ENCODE measurements at regions of chrX and their contacts with region 1.

Region 1: GRCh38 chrX:13653022-13653693 is at the start of gene TCEANC:
- DNase-seq: peak; percentile 82 to 97 (median 95)
- ATAC-seq: peak; percentile 93
- H3K4me3 ChIP-seq: peak within 1 kb of the TSS; percentile 63 to 90
- H3K4me3 Mint-ChIP-seq: peak within 1 kb of the TSS; percentile 92
- H3K27ac ChIP-seq: peak within 1 kb of the TSS; percentile 85 to 95
- H3K27ac Mint-ChIP-seq: peak within 1 kb of the TSS; percentile 98
- H3K4me1 ChIP-seq: peaks cover 17% of the 10 kb centered on the region
- H3K4me1 Mint-ChIP-seq: peaks cover 30% of the 10 kb centered on the region
- H3K27me3 ChIP-seq: no peaks in the 10 kb centered on the region
- H3K27me3 Mint-ChIP-seq: no peaks in the 10 kb centered on the region
- CTCF ChIP-seq: no peak
- total RNA-seq, gene TCEANC: 8.2 to 9.5 TPM

Region 2: DNA sequence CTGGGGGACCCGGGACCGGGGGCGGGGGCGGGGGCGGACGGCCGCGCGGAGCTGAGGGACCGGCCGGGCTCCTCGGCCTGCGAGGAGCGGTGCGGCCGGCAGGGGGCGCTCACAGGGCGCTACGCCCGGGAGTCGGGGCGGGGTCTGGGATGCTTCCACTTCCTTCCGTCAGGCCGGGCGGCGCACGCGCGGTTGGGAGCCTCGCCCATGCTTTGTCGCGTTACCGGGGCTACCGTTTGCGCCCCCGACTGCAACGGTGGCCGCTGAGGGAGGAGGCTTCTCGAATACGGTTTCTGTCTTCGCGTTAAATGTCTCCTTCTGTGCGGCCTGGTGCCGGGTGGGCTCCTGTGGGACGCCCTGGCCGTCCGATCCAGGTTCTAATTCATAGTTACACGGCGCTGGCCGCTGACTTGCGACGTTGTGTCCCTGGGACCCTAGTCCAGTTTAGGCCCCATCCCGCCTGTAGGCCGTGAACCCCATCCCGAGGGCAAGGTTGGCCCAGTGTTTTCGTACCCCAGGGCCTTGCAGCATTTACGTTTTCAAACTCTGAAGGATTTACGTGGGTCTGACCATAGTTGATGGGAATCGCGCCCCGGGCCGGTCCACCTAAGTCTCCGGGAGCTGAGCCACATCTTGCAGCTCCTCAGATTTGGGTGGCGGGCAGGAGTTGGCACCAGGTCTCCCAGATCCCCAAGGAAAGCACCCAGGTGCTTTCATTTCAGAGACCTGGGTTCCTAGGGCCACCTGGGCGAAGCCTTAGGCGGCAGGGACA is 1894.6 kb before region 1 on chrX:
- CTCF ChIA-PET with region 1: no interaction called
- POLR2A ChIA-PET with region 1: no interaction called
- intact Hi-C with region 1: loop called in 1 of 2 experiments (anchors 10 kb)
- DNase-seq: peak; percentile 76 to 93 (median 89)
- ATAC-seq: peak; percentile 61
- H3K4me3 ChIP-seq: peak overlapping the region; percentile 76 to 91
- H3K4me3 Mint-ChIP-seq: peak overlapping the region; percentile 88
- H3K27ac ChIP-seq: peak overlapping the region; percentile 87 to 93
- H3K27ac Mint-ChIP-seq: peak overlapping the region; percentile 97
- H3K4me1 ChIP-seq: peaks cover 18% of the 10 kb centered on the region
- H3K4me1 Mint-ChIP-seq: peaks cover 34% of the 10 kb centered on the region
- H3K27me3 ChIP-seq: no peaks in the 10 kb centered on the region
- H3K27me3 Mint-ChIP-seq: no peaks in the 10 kb centered on the region
- CTCF ChIP-seq: peak; percentile 62

Region 3: DNA sequence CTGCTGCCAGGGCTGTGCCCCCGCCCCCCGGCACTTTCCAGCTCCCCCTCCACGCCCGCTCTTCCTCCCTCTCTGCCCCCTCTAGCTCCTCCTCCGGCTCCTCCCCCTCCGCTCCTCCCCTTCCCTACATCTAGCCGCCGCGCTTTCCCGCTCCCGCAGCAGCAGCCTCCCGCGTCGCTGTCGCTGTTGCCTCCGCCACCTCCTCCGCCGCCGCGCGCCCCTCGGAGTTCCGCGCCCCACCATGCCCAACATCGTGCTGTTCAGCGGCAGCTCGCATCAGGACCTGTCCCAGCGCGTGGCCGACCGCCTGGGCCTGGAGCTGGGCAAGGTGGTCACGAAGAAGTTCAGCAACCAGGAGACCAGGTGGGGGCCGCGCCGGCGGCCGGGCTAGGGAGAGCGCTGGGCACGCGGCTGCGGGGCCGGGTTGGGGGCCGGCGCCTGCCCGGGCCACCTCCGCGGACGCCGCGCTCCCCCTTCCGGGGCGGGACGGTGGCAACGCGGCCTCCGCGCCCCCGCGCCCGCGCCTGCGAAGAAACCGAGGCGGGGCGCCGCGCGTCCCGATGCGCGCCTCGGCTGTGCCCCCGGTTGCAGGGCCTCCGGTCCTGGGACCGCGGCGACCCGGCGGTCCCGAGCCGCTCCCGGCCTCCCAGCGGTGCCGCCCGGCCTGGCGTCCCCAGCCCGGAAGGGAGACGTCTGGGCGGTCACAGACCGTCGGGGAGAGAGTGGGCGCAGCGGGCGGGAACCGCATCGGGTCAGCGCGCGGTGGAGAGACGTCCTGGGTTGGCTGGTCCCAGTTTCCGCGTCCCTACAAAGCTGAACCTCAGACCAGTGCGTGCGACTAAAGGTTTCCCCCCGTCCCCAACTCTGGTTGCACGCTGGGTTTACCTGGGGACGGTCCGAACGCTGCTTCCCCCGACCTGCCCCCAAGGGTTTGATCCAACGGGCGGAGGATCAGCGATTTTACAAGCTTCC is 861.6 kb before region 1 on chrX and contains the start of gene PRPS2:
- CTCF ChIA-PET with region 1: no interaction called
- POLR2A ChIA-PET with region 1: no interaction called
- intact Hi-C with region 1: loop called in 1 of 2 experiments (anchors 5 kb)
- DNase-seq: peak; percentile 43 to 80 (median 71)
- ATAC-seq: peak; percentile 93
- H3K4me3 ChIP-seq: peak within 1 kb of the TSS; percentile 69 to 74
- H3K4me3 Mint-ChIP-seq: peak within 1 kb of the TSS; percentile 90
- H3K27ac ChIP-seq: peak within 1 kb of the TSS; percentile 39 to 52
- H3K27ac Mint-ChIP-seq: peak within 1 kb of the TSS; percentile 81
- H3K4me1 ChIP-seq: peaks cover 9% of the 10 kb centered on the region
- H3K4me1 Mint-ChIP-seq: peaks cover 26% of the 10 kb centered on the region
- H3K27me3 ChIP-seq: no peaks in the 10 kb centered on the region
- H3K27me3 Mint-ChIP-seq: no peaks in the 10 kb centered on the region
- CTCF ChIP-seq: no peak
- total RNA-seq, gene PRPS2: 10.5 to 13.4 TPM

Region 4: GRCh38 chrX:12955882-12956703 is 697.1 kb before region 1 on chrX:
- CTCF ChIA-PET with region 1: no interaction called
- POLR2A ChIA-PET with region 1: no interaction called
- intact Hi-C with region 1: loop called in 1 of 2 experiments (anchors 5 kb)
- DNase-seq: peak in 8 of 9 experiments; percentile 50 to 83 (median 68)
- ATAC-seq: peak; percentile 22
- H3K4me3 ChIP-seq: peak overlapping the region; percentile 34 to 43
- H3K4me3 Mint-ChIP-seq: peak overlapping the region; percentile 79
- H3K27ac ChIP-seq: peak overlapping the region; percentile 62 to 89
- H3K27ac Mint-ChIP-seq: peak overlapping the region; percentile 99
- H3K4me1 ChIP-seq: peaks cover 79% of the 10 kb centered on the region
- H3K4me1 Mint-ChIP-seq: peaks cover 74% of the 10 kb centered on the region
- H3K27me3 ChIP-seq: no peaks in the 10 kb centered on the region
- H3K27me3 Mint-ChIP-seq: no peaks in the 10 kb centered on the region
- CTCF ChIP-seq: no peak

Region 5: DNA sequence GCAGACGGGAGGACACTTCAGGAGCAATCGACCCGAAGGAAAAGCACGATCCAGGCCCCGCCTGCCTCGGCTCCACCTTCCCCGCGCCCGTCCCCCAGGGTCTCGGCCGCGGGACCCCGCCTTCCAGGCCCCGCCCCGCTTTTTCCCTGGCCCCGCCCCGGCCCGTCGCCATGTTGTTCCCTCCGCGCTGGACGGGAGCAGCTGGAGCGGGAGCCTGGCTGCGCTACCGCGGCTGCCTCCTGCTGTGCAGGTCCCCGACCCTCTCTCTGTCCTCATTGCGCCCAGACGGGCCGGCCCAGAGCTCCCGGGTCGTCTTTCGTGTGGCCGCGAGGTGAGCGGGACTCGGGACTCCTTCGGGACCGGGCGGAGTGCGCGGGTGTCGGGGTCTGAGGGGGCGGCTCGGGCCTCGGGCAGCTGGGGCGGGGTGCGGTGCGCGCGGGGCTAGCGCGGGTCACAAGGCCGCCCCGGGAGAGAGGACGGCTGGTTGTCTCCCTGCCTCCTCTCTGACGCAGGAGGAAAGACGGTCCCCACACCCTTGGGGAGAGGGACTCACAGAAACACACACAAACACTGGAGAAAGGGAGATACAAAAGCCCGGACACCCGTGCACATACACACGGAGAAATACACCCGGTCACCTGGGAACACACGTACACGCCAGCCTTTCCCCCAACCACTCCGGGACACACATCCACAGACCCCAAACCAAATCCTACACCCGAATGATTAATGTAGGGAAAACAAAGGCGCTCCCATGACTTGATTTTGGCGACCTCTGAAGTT is 36.0 kb after region 1 on chrX and contains the start of gene RAB9A:
- CTCF ChIA-PET with region 1: no interaction called
- POLR2A ChIA-PET with region 1: interaction called, 4 read pairs
- intact Hi-C with region 1: loop called (anchors 1 to 2 kb)
- DNase-seq: peak; percentile 58 to 85 (median 78)
- ATAC-seq: peak; percentile 88
- H3K4me3 ChIP-seq: peak within 1 kb of the TSS; percentile 79 to 82
- H3K4me3 Mint-ChIP-seq: peak within 1 kb of the TSS; percentile 95
- H3K27ac ChIP-seq: peak within 1 kb of the TSS; percentile 80 to 90
- H3K27ac Mint-ChIP-seq: peak within 1 kb of the TSS; percentile 98
- H3K4me1 ChIP-seq: peaks cover 25% of the 10 kb centered on the region
- H3K4me1 Mint-ChIP-seq: peaks cover 60% of the 10 kb centered on the region
- H3K27me3 ChIP-seq: no peaks in the 10 kb centered on the region
- H3K27me3 Mint-ChIP-seq: no peaks in the 10 kb centered on the region
- CTCF ChIP-seq: no peak
- total RNA-seq, gene RAB9A: 19.4 to 21.5 TPM

Region 6: DNA sequence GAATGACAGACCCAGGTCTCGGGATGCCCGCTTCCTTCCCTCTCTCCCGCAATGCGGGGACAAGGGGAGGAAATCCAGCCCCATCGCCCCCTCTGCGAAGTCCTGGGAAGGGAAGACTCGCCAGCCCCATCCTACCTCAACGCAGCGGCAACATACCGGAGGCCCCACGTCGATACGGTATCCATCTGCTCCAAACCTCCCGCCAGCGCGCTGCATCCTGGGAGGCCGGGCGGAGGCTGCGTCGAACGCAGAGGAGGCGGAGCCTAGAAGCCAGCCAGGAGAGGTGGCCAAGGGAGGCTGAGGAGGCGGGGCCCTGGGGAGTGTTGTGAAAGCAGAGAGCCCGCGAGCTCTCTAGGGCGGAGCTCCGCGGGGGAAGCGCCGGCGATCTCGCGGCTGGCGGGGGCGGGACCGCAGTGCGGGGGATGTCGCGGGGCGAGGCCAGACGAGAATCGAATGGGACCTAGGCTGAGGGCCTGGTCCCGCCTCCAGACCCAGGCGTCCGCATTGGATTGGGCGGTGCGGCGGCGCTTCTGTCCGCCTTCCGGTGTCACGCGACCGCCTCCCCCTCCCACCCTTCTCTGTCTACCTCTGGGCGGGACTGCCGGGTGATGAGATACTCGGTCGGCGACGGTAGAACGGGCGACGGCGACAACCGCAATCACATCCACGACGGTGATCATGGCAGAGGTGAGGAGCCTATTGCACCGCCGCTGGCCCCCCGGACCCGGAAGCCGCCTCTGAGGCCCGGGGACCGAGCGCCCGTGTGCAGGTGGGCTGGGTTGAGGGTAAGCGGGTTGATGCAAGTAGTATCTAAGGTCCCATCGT is 1219.9 kb after region 1 on chrX and contains the starts of genes FANCB and MOSPD2:
- CTCF ChIA-PET with region 1: no interaction called
- POLR2A ChIA-PET with region 1: no interaction called
- intact Hi-C with region 1: loop called (anchors 2 to 10 kb)
- DNase-seq: peak; percentile 85 to 97 (median 92)
- ATAC-seq: peak; percentile 89
- H3K4me3 ChIP-seq: peak within 1 kb of the TSS; percentile 81 to 83
- H3K4me3 Mint-ChIP-seq: peak within 1 kb of the TSS; percentile 84
- H3K27ac ChIP-seq: peak within 1 kb of the TSS; percentile 79 to 86
- H3K27ac Mint-ChIP-seq: peak within 1 kb of the TSS; percentile 92
- H3K4me1 ChIP-seq: peaks cover 9% of the 10 kb centered on the region
- H3K4me1 Mint-ChIP-seq: peaks cover 21% of the 10 kb centered on the region
- H3K27me3 ChIP-seq: no peaks in the 10 kb centered on the region
- H3K27me3 Mint-ChIP-seq: no peaks in the 10 kb centered on the region
- CTCF ChIP-seq: no peak
- total RNA-seq, gene FANCB: 2.5 to 3.1 TPM
- total RNA-seq, gene MOSPD2: 4.2 to 4.6 TPM

Measured in CD8-positive, alpha-beta T cell (primary cell).